ENCODE measurements at regions of chr5 and their contacts with region 1.

Region 1: DNA sequence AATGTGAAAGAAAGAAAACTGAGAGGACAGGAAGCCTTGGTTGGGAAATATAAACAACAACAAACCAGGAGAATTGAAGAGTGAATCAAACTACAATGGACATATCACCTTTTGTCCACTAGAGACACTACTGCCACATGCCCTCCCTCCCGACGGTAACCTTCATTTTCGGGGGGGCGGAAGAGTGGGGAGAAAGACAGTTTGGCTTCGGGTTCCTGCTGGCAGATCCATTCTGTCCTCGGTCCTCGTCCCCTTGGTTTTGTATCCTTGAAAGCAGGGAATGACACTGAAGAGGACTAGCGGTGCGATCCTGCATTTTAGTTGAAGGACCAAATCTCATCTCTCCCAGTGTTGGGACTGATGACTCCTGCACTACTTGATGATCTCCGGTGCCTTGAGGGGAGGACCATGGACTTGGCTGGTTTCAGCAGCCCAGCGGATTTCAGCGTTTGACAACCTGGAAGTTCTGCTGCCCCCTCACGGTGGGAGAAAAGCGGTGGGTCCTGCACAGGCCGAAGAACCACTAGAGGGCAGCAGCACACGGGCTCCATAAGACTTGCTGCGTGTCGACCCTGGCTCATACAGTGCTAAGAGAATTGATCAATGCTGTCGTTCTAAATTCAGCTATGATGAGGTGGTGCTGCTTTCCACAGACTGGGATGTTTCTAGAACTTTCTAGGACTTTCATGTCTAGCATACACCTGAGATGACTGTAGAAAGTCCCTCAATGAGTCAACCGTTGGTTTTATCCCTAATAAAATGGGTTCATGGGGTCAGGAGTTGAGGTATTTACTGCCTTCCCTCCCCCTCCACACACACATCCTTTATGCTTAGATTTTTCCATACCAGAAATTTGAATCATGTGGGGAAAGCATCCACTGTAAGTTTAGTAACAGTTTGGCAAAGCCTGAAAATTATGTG is 15.1 kb upstream of the ZNF131 start:
- DNase-seq: peak; percentile 78 to 86
- ATAC-seq: peak; percentile 97 to 98
- H3K4me3 ChIP-seq: peak overlapping the region; percentile 50 to 77 (median 61)
- H3K27ac ChIP-seq: peak overlapping the region; percentile 71 to 85 (median 79)
- H3K4me1 ChIP-seq: peaks cover 3 to 4% of the 10 kb centered on the region in 2 donors
- H3K27me3 ChIP-seq: no peaks in the 10 kb centered on the region
- CTCF ChIP-seq: peak; percentile 94 to 100 (median 97)
- POLR2A ChIP-seq: no peak

Region 2: GRCh38 chr5:42908509-42909488 is 196.8 kb before region 1 on chr5:
- in situ Hi-C with region 1: loop called in 1 of 4 experiments (anchors 10 kb)
- intact Hi-C with region 1: no loop called
- DNase-seq: peak; percentile 75 to 81
- ATAC-seq: peak; percentile 92 to 96
- H3K4me3 ChIP-seq: peak overlapping the region; percentile 52 to 64 (median 56)
- H3K27ac ChIP-seq: peak overlapping the region in 1 of 4 donors; percentile 11
- H3K4me1 ChIP-seq: no peaks in the 10 kb centered on the region
- H3K27me3 ChIP-seq: no peaks in the 10 kb centered on the region
- CTCF ChIP-seq: peak; percentile 73 to 87 (median 83)
- POLR2A ChIP-seq: no peak

Region 3: DNA sequence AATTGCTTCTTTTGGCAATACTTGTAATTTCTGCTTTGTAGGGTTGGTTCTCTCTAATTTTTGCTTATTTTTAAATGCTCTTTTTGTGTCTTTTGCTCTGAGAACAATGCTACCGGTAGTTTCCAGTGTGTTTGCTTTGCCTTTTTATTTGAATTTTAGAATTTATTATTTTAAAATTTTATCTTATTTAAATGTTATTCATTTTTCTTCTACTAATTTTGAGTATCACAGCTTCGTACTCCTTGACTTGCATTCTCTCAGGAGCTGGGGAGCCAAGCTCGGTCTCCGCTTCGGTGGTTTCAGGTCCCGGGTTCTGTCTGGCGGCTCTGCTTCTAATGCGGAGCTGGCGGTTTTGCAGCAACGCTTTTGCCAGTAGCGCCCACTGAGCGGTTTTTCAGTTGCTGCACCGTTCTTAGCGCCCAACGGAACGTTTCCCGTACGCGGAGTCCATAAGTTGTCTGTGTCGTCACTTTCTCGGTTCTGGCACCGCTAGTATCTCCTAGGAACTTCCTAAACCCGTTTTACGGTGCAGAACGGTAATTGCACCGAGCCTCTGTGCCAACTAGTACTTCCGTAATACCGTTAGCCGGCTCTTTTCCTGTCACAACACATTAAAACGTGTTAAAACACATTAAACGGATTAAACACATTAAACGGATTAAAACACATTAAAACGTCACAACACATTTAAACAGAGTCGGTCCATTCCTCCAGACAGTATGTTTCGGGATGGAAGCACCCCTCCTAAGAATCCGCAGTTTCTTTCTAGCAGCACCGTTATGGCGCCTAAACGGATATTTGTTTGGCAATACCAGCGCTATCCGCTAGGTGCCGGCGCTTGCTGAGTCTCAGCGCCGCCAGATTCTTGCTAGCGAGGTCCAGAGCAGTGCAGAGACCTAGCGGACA is 111.1 kb before region 1 on chr5:
- in situ Hi-C with region 1: loop called in 1 of 4 experiments (anchors 10 kb)
- intact Hi-C with region 1: loop called (anchors 5 kb)
- DNase-seq: peak; percentile 64 to 85
- ATAC-seq: peak; percentile 87 to 88
- H3K4me3 ChIP-seq: peak overlapping the region; percentile 46 to 70 (median 66)
- H3K27ac ChIP-seq: peak overlapping the region; percentile 85 to 93 (median 88)
- H3K4me1 ChIP-seq: peaks cover 5 to 15% of the 10 kb centered on the region in 2 donors
- H3K27me3 ChIP-seq: peaks cover 68 to 83% (median 69%) of the 10 kb centered on the region in 3 donors
- CTCF ChIP-seq: peak; percentile 84 to 92 (median 89)
- POLR2A ChIP-seq: no peak

Region 4: DNA sequence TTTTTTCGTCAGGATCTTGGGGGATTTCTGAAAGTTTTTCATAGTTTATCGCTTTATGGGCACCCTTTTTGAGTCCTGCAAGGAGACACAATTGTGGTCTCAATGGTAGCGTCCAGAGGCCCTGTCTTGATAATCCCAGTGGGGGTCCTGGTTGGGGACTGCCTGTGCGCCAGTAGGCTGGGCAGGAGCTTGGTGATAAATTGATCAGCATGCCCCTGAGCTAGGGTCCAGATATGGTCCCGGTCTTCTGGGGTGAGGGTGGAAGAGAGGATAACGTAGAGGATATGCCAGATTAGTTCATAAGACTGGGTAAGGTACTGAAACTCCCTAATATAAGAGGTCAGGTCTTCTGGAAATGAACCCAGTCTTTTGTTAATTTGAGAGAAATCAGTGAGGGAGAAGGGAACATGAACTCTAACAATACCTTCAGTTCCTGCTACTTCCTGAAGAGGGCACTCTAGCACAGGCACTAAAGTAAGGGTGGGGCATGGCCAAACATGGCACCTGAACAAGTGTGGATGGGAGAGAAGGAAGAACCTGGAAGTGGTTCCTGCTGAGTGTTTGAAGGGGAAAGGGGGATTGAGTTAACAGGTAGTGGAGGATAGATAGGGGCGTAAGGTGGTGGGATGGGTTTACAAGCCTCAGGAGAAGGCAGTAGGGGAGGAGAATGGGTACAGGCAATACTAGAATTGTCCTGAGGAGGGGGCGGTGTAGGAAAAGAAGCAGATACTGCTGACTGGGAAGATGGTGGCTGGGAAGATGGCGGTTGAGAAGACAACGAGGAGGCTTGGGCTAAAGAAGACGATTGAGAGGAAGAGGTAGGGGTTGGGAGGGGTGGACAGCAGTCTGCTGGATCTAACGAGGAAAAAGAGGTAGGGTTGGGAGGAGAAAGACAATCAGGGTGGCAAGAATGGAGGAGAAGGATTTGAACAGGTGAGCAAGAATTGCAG is 31.8 kb before region 1 on chr5:
- in situ Hi-C with region 1: loop called in 1 of 4 experiments (anchors 5 kb)
- intact Hi-C with region 1: loop called (anchors 1 kb)
- DNase-seq: no peak
- ATAC-seq: peak in 1 of 2 donors; percentile 49
- H3K4me3 ChIP-seq: no peak overlapping the region
- H3K27ac ChIP-seq: peak overlapping the region in 2 of 4 donors; percentile 74 to 84
- H3K4me1 ChIP-seq: peaks cover 21 to 28% of the 10 kb centered on the region in 2 donors
- H3K27me3 ChIP-seq: no peaks in the 10 kb centered on the region
- CTCF ChIP-seq: peak; percentile 31 to 71 (median 57)
- POLR2A ChIP-seq: no peak

Region 5: DNA sequence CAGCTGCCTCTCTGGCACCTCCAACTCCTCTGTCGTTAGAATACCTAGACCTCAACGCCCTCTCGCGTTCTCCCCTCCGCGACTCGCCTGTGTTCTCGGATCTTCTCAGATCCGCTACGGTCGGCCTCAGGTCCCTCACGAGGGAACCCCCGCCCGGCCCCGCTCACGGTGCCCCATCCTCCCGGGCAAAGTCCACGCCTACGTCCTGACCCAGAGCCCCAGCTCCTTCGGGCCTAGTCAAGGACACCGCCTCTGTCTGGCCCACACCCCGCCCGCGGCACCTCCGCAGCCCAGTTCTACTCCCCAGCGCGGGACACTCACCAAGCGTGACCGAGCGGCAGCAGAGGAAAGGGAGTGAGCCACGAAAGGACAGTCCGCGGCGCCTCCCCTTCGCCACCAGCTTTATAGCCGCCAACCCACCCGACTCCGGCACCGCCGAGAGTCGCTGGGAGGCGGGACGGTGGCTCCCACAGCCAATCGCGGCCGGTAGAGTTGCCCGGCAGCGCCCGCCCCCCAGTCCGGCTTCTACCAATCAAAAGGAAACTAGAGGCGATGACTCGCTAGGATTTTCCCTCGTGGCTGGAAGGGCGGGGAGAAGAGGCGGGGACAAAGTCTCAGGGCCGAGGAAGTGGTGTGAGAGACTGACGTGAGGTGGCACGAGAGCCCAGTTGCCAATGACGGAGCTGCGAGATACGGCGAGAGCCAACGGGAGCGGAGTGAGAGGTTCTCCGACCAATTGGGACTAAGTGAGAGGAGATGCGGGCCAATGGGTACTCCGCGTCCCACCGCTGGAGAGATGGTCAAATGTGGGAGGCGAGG is 207.6 kb after region 1 on chr5 and contains the start of gene HMGCS1:
- in situ Hi-C with region 1: loop called in 2 of 4 experiments (anchors 25 kb)
- intact Hi-C with region 1: loop called (anchors 2 kb)
- DNase-seq: peak; percentile 98 to 99
- ATAC-seq: peak; percentile 99
- H3K4me3 ChIP-seq: peak within 1 kb of the TSS; percentile 77 to 93 (median 83)
- H3K27ac ChIP-seq: peak within 1 kb of the TSS; percentile 89 to 94 (median 90)
- H3K4me1 ChIP-seq: peaks cover 18 to 28% of the 10 kb centered on the region in 2 donors
- H3K27me3 ChIP-seq: no peaks in the 10 kb centered on the region
- CTCF ChIP-seq: peak in 1 of 5 experiments; percentile 14
- POLR2A ChIP-seq: peak; percentile 87 to 96
- total RNA-seq, gene HMGCS1: 6.1 to 15.0 (median 8.2) TPM

Region 6: DNA sequence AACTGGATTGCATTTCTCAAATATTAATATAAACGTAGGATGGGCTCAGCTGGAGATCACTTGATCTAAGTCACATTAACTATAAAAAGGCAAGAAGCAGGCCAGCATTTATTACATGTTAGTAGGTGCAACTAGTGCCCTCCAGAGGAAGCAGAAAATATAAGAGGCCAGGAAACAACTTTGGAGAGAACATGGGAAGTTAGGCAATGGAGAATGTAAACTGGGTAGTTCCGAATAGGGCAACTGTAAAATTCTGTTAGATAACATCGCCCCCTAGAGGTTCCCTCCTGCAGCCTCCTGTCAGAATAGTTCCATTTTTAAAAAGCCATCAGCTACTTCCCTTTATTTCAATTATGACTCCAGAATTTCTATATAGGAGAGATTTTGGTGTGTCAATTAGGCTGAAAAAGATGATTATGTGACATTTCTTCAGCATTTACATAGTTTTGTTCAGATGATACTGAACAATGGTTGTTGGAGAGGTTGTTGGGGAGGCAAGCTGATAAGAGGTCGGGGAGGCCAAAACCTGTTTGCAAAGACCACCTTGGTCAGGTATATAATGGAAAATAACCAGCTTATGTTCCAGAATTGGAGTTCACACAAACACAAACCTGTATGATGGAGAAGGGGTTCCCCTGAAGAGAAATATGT is 284.2 kb after region 1 on chr5:
- in situ Hi-C with region 1: no loop called
- intact Hi-C with region 1: loop called (anchors 1 kb)
- DNase-seq: peak; percentile 15 to 35
- ATAC-seq: peak; percentile 77 to 96
- H3K4me3 ChIP-seq: no peak overlapping the region
- H3K27ac ChIP-seq: no peak overlapping the region
- H3K4me1 ChIP-seq: no peaks in the 10 kb centered on the region
- H3K27me3 ChIP-seq: no peaks in the 10 kb centered on the region
- CTCF ChIP-seq: peak; percentile 44 to 76 (median 55)
- POLR2A ChIP-seq: no peak